ENCODE measurements at regions of chr2 and their contacts with region 1.

Region 1: GRCh38 chr2:191066197-191066918 is 52.4 kb upstream of the STAT1 start:
- DNase-seq: no peak
- ATAC-seq: no peak
- H3K4me3 ChIP-seq: peak overlapping the region in 1 of 10 donors; percentile 6
- H3K27ac ChIP-seq: peak overlapping the region in 1 of 10 donors; percentile 63
- H3K4me1 ChIP-seq: peaks cover 0 to 19% (median 0%) of the 10 kb centered on the region in 9 donors
- H3K27me3 ChIP-seq: no peaks in the 10 kb centered on the region
- CTCF ChIP-seq: no peak

Region 2: GRCh38 chr2:191150600-191151330 is 84.4 kb after region 1 on chr2 and contains the start of gene STAT4:
- intact Hi-C with region 1: loop called in 1 of 10 experiments (anchors 10 kb)
- DNase-seq: peak; percentile 19 to 29
- ATAC-seq: peak in 7 of 8 donors; percentile 57 to 86 (median 80)
- H3K4me3 ChIP-seq: peak within 1 kb of the TSS; percentile 37 to 66 (median 53)
- H3K27ac ChIP-seq: peak within 1 kb of the TSS in 4 of 10 donors; percentile 2 to 84 (median 59)
- H3K4me1 ChIP-seq: peaks cover 0 to 24% (median 4%) of the 10 kb centered on the region in 9 donors
- H3K27me3 ChIP-seq: no peaks in the 10 kb centered on the region
- CTCF ChIP-seq: no peak
- total RNA-seq, gene STAT4: 0.52 to 9.4 (median 2.2) TPM

Region 3: GRCh38 chr2:191515551-191515950 is 449.2 kb after region 1 on chr2:
- intact Hi-C with region 1: loop called in 1 of 10 experiments (anchors 10 kb)
- DNase-seq: no peak
- ATAC-seq: peak in 2 of 8 donors; percentile 42 to 45
- H3K4me3 ChIP-seq: no peak overlapping the region
- H3K27ac ChIP-seq: no peak overlapping the region
- H3K4me1 ChIP-seq: peaks cover 0 to 7% (median 0%) of the 10 kb centered on the region in 9 donors
- H3K27me3 ChIP-seq: no peaks in the 10 kb centered on the region
- CTCF ChIP-seq: no peak